ENCODE measurements at regions of chr14 and their contacts with region 1.

Region 1: GRCh38 chr14:74945823-74946682 is 9.3 kb downstream of the PGF start:
- DNase-seq: peak; percentile 60
- H3K4me3 Mint-ChIP-seq: no peak overlapping the region
- H3K27ac Mint-ChIP-seq: no peak overlapping the region
- H3K4me1 Mint-ChIP-seq: peaks cover 32% of the 10 kb centered on the region
- H3K27me3 Mint-ChIP-seq: peaks cover 2% of the 10 kb centered on the region

Region 2: DNA sequence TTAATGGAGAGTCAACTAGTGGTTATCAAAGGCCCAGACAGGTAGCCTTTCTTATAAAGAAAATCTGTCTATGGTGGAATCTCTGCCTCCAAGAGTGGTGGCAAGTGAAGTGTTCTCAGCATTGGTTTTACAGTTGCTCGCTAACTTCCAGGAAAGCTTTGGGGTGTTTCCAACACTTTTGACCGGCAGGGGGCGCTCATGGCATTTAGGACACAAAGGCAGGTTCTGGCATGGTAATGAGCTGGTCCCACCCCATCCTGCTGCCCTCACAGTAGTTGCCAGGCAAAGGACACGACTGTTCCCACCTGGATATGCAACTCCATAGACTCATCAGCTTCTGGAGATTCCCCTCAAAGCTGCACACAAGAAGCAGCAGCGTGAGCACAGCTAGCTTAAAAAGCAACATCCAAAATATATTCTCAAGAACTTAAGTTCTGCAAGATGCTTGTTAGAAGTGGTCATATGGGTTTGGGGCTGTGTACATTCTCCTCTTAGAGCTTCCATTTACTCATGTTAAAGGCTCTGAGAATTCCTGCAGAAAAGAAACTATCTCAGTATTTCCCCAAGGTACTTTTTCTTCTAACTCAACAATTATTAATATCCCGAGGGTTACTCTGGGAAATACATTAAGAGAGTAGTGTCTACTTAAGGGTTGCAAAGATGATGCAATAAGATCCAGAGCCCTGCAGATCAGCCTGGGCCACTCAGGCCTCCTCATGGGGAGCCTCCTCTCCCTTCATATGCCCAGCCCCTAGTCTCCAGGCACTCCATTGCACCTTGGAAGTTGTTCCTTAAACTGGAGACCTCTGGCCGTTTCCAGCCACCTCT is 84.9 kb before region 1 on chr14:
- intact Hi-C with region 1: loop called (anchors 1 kb)
- DNase-seq: peak; percentile 81
- H3K4me3 Mint-ChIP-seq: no peak overlapping the region
- H3K27ac Mint-ChIP-seq: no peak overlapping the region
- H3K4me1 Mint-ChIP-seq: peaks cover 12% of the 10 kb centered on the region
- H3K27me3 Mint-ChIP-seq: peaks cover 1% of the 10 kb centered on the region

Region 3: GRCh38 chr14:74922739-74923401 is 23.2 kb before region 1 on chr14 and contains the start of gene RPS6KL1:
- intact Hi-C with region 1: loop called (anchors 2 kb)
- DNase-seq: peak; percentile 73
- H3K4me3 Mint-ChIP-seq: peak within 1 kb of the TSS; percentile 72
- H3K27ac Mint-ChIP-seq: peak within 1 kb of the TSS; percentile 31
- H3K4me1 Mint-ChIP-seq: no peaks in the 10 kb centered on the region
- H3K27me3 Mint-ChIP-seq: peaks cover 3% of the 10 kb centered on the region
- total RNA-seq, gene RPS6KL1: 10.8 and 11.6 TPM in 2 replicates

Region 4: GRCh38 chr14:75069045-75069810 is 123.2 kb after region 1 on chr14 and contains the start of gene ZC2HC1C:
- intact Hi-C with region 1: loop called (anchors 5 kb)
- DNase-seq: peak; percentile 65
- H3K4me3 Mint-ChIP-seq: no peak within 1 kb of the TSS
- H3K27ac Mint-ChIP-seq: peak within 1 kb of the TSS; percentile 66
- H3K4me1 Mint-ChIP-seq: peaks cover 5% of the 10 kb centered on the region
- H3K27me3 Mint-ChIP-seq: no peaks in the 10 kb centered on the region
- total RNA-seq, gene ZC2HC1C: 0.71 and 0.80 TPM in 2 replicates

Region 5: DNA sequence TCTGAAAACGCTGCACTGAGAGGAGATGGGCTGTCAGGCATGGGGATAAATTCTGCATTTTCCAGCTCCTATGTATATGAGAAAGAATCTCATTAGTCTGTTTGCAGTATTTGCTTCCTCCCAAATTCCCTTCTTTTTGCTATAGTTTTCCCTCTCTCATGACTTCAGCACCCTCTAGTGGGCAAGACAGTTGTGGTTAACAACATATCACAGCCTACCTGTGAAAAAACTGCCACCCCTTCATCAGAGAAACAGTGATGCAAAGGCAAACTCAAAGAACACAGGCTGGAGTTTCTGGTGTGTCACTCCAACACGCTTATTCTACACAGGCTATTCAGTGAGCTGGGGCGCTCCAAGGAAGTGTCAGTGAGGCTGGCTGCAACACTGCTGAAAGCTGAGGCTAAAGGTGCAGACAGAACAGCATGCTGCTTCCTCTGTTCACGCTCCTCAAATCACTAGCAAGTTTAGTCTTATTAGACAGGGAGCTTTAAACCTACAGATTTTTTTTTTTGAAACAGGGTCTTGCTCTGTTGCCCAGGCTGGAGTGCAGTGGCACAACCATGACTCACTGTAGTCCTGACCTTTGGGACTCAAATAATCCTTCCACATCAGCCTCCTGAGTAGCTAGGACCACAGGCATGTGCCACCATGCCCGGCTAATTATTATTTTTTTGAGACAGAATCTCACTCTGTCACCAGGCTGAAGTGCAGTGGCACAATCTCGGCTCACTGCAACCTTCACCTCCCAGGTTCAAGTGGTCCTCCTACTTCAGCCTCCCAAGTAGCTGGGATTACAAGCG is 142.7 kb after region 1 on chr14:
- intact Hi-C with region 1: loop called (anchors 1 kb)
- DNase-seq: peak; percentile 30
- H3K4me3 Mint-ChIP-seq: no peak overlapping the region
- H3K27ac Mint-ChIP-seq: no peak overlapping the region
- H3K4me1 Mint-ChIP-seq: no peaks in the 10 kb centered on the region
- H3K27me3 Mint-ChIP-seq: no peaks in the 10 kb centered on the region

Region 6: DNA sequence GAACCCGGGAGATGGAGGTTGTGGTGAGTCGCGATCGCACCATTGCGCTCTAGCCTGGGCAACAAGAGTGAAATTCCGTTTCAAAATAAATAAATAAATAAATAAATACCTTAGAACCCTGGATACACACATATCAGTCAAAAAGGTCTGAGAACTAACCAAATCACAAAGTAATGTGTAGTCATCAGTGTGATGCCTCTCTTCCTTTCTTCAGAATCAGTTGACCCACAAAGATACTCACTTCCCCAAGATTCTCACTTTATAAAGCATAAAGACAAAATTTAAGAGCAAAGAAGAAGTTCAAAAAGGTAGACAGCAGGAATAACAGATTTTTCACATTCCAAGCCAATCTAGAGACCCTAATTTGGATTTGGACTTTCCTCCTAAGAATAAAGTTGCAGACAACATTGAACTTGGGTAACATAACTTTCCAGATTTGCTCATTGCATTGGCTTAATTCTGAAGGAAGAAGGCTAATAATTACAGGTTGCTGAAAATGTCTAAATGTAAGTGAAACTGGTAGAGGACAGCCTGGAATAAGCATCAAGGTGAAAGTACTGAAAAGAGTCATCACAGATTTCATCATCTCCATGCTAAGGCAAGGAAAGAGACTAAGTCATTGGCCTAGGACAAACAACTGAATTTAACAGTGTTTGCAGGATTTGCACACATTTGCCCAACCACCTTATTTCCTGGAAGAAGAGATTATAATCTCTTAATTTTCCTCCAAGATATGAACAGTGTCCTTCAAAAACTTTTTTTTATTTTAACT is 213.0 kb after region 1 on chr14:
- intact Hi-C with region 1: no loop called
- DNase-seq: no peak
- H3K4me3 Mint-ChIP-seq: no peak overlapping the region
- H3K27ac Mint-ChIP-seq: no peak overlapping the region
- H3K4me1 Mint-ChIP-seq: peaks cover 47% of the 10 kb centered on the region
- H3K27me3 Mint-ChIP-seq: no peaks in the 10 kb centered on the region